ENCODE measurements at regions of chr12 and their contacts with region 1.

Region 1: GRCh38 chr12:117212563-117213190 is 22.4 kb upstream of the FBXO21 start:
- DNase-seq: peak; percentile 82
- H3K4me3 ChIP-seq: no peak overlapping the region
- H3K27ac ChIP-seq: no peak overlapping the region
- H3K4me1 ChIP-seq: no peaks in the 10 kb centered on the region
- H3K27me3 ChIP-seq: no peaks in the 10 kb centered on the region
- CTCF ChIP-seq: peak; percentile 90

Region 2: GRCh38 chr12:117587631-117588287 is 375.1 kb after region 1 on chr12:
- CTCF ChIA-PET with region 1: no interaction called
- POLR2A ChIA-PET with region 1: no interaction called
- intact Hi-C with region 1: loop called (anchors 2 kb)
- DNase-seq: peak; percentile 63
- H3K4me3 ChIP-seq: no peak overlapping the region
- H3K27ac ChIP-seq: no peak overlapping the region
- H3K4me1 ChIP-seq: no peaks in the 10 kb centered on the region
- H3K27me3 ChIP-seq: peaks cover 22% of the 10 kb centered on the region
- CTCF ChIP-seq: peak; percentile 87

Region 3: GRCh38 chr12:117671734-117672133 is 459.1 kb after region 1 on chr12:
- CTCF ChIA-PET with region 1: no interaction called
- POLR2A ChIA-PET with region 1: no interaction called
- intact Hi-C with region 1: loop called (anchors 2 kb)
- DNase-seq: peak; percentile 70
- H3K4me3 ChIP-seq: no peak overlapping the region
- H3K27ac ChIP-seq: no peak overlapping the region
- H3K4me1 ChIP-seq: no peaks in the 10 kb centered on the region
- H3K27me3 ChIP-seq: peaks cover 33% of the 10 kb centered on the region
- CTCF ChIP-seq: peak; percentile 79

Region 4: DNA sequence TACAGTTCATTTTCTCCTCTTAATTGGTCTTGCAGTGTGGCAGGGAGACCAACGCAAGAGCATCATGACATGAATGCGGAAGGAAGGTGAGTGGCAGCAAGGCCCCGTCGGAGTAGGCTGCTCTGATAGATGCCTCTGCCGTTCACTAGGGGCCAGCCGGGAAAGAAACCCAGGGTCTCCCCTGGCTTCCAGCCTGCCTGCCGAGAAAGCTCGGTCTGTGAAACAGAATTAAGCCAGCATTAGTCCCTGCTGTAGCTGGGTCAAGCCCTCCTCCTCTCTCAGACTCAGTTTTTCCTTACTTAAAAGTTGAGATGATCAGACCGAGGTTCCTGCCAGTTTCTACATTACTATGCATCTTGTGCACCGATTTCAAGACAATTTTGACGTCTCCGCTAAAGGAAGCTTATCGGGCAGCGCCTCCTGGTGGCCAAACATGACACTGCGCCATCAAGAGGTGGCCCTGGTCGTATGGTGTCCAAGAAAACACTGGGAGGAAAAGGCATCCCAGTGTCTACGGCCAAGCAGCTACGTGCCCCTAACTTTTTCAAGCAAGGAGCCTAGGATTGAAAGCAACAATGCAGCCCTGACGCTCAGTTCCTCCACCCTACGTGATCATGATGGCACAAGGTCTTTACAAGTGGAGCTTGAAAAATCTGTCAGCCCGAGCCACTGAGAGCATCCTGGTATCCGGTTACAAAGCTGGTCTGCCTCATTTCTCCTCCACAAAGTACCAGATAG is 624.5 kb after region 1 on chr12:
- CTCF ChIA-PET with region 1: interaction called, 3 read pairs
- POLR2A ChIA-PET with region 1: no interaction called
- intact Hi-C with region 1: loop called (anchors 5 kb)
- DNase-seq: peak; percentile 82
- H3K4me3 ChIP-seq: no peak overlapping the region
- H3K27ac ChIP-seq: no peak overlapping the region
- H3K4me1 ChIP-seq: no peaks in the 10 kb centered on the region
- H3K27me3 ChIP-seq: peaks cover 34% of the 10 kb centered on the region
- CTCF ChIP-seq: peak; percentile 99

Region 5: GRCh38 chr12:117850048-117850447 is 637.4 kb after region 1 on chr12:
- CTCF ChIA-PET with region 1: no interaction called
- POLR2A ChIA-PET with region 1: no interaction called
- intact Hi-C with region 1: loop called (anchors 5 kb)
- DNase-seq: peak; percentile 60
- H3K4me3 ChIP-seq: no peak overlapping the region
- H3K27ac ChIP-seq: no peak overlapping the region
- H3K4me1 ChIP-seq: no peaks in the 10 kb centered on the region
- H3K27me3 ChIP-seq: peaks cover 24% of the 10 kb centered on the region
- CTCF ChIP-seq: peak; percentile 88

Measured in A673 (cell line).